H1 (cell line): ENCODE measurements at regions of chr20 and their contacts with region 1.

Region 1: DNA sequence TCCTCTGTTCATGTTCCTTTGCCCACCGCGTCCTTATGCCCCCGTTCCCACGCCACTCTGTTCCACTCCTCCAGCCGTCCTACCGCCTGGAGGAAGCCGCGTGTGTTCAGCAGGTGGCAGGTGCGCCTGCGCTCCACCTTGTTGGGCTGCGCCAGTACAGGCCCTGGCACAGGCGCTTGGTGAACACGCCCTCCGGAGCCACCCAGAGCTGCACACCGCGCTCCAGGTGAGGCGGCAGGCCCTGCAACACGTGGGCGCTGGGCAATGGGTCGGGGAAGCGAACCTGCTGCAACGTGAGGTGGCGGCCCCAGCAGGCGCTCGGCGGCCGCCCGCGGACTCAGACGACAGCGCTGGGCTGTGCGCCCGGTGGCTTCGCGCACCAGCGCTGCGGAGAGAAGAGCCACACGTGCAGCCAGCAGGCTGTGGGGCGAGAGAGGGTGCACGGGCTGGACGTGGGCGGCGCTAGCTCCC is 4.1 kb upstream of the FOXS1 start:
- DNase-seq: no peak
- H3K4me3 ChIP-seq: 0 out of 8 replicates have a peak overlapping the region, but pooled peaks of 1 of the 4 experiments have one; percentile 6
- H3K27ac ChIP-seq: no peak overlapping the region
- H3K4me1 ChIP-seq: peaks cover 0 to 14% (median 10%) of the 10 kb centered on the region in 4 experiments; a peak in 5 of 7 replicates
- H3K27me3 ChIP-seq: peaks cover 5 to 38% (median 25%) of the 10 kb centered on the region in 4 experiments
- CTCF ChIP-seq: no peak
- EP300 ChIP-seq: no peak
- POLR2A ChIP-seq: no peak
- RAD21 ChIP-seq: no peak; a peak in 1 of 4 replicates

Region 2: DNA sequence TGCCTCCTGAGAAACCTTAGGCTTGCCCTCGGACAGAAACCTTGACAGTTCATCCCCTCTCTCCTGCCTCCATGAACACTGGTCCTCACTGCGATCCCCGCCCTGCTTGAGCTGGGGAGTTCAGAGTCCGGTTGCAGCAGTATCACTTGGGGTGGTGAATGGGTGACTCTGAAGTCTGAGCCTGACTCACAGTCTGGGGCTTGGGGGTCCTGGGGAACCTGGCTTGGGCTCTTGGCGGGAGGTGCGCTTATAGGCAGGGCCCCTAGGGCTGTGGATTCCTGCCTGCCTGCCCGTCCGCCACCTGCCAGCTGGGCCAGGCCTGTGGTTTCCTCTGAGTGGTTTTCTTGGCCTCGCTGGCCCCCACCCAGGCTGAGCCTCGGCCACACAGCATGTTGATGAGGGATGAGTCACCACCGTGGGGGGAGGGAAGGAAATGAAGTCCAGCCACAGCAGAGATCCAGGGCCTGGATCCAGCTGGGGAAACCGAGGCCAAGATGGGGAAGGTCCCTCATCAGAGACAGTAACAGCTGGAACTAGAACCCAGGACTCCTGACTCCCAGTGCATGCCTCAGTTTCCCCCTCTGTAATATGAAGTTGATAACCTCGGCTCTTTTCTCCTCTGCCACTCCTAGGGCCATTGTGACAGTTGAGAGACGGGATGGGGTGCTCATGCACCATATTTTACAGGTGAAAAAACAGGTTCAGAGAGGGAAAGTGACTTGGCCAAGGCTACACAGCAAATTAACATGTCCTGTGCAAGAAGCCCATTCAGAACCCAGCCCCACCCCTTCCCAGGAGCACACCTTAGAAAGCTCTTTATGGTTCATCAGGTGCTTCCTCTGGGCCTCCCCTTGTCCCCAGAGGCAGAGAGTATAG is 13.3 kb before region 1 on chr20:
- CTCF ChIA-PET with region 1: interaction called, 111 read pairs
- POLR2A ChIA-PET with region 1: no interaction called
- DNase-seq: no peak
- H3K4me3 ChIP-seq: no peak overlapping the region
- H3K27ac ChIP-seq: no peak overlapping the region
- H3K4me1 ChIP-seq: peaks cover 0 to 17% (median 16%) of the 10 kb centered on the region in 4 experiments; a peak in 6 of 7 replicates
- H3K27me3 ChIP-seq: no peaks in the 10 kb centered on the region
- CTCF ChIP-seq: no peak
- EP300 ChIP-seq: no peak
- POLR2A ChIP-seq: no peak
- RAD21 ChIP-seq: no peak

Region 3: DNA sequence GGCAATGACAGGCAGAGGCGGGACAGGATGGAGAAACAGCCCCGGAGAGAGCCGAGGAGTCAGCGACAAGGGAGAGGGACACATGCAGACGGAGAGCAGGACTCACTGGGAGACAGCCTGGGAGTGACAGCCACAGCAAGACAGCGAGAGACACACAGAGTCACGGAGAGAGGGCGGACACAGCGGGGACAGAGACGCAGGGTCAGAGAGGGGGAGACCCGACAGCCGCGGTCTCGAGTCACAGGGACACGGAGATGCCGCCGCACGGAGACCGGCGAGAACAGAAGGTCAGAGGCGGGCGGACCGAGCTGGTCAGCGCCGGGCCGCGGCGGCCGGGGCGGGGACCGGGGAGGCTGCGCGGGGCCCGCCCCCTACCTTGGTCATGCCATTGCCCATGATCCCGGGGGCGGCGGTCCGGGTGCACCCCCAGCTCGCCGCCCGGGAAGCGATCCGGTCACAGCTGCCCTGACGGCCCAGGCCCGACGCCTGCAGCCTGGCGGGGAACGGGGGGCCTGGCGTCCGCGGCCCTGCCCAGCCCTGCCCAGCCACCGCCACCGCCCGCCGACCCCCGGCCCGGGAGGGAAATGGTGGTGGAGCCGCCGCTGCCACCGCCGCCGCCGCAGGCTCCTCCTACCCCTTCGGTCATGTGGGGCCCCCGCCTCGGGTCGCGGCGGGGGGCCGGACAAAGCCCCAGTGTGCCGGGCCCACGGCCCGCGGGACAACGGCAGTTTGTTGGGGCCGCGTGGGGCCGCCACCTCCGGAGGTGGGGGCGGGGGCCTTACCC is 20.6 kb after region 1 on chr20 and contains the starts of genes DUSP15 and TTLL9:
- CTCF ChIA-PET with region 1: interaction called, 32 read pairs
- POLR2A ChIA-PET with region 1: no interaction called
- DNase-seq: peak in 1 of 2 experiments; percentile 79
- H3K4me3 ChIP-seq: peak within 1 kb of the TSS; percentile 47 to 89 (median 71)
- H3K27ac ChIP-seq: no peak within 1 kb of the TSS
- H3K4me1 ChIP-seq: peaks cover 0 to 12% (median 6%) of the 10 kb centered on the region in 4 experiments; a peak in 6 of 7 replicates
- H3K27me3 ChIP-seq: peaks cover 19 to 35% (median 29%) of the 10 kb centered on the region in 4 experiments
- CTCF ChIP-seq: peak in 1 of 3 experiments; percentile 0; a peak in 1 of 4 replicates
- EP300 ChIP-seq: peak in 1 of 2 experiments; percentile 45; a peak in 1 of 3 replicates
- POLR2A ChIP-seq: peak in 1 of 2 experiments; percentile 32; a peak in 1 of 3 replicates
- RAD21 ChIP-seq: 0 out of 4 replicates have a peak, but pooled peaks of 1 of the 2 experiments have one; percentile 3
- total RNA-seq, gene DUSP15: 0.91 and 1.0 TPM in 2 replicates
- total RNA-seq, gene TTLL9: not detected in 2 replicates

Region 4: GRCh38 chr20:31943052-31943471 is 93.6 kb after region 1 on chr20:
- CTCF ChIA-PET with region 1: interaction called, 48 read pairs
- POLR2A ChIA-PET with region 1: no interaction called
- DNase-seq: no peak
- H3K4me3 ChIP-seq: no peak overlapping the region
- H3K27ac ChIP-seq: no peak overlapping the region
- H3K4me1 ChIP-seq: peaks cover 0 to 2% (median 1%) of the 10 kb centered on the region in 4 experiments; a peak in 4 of 7 replicates
- H3K27me3 ChIP-seq: peaks cover 0 to 7% (median 0%) of the 10 kb centered on the region in 4 experiments; a peak in 3 of 7 replicates
- CTCF ChIP-seq: no peak
- EP300 ChIP-seq: no peak
- POLR2A ChIP-seq: no peak
- RAD21 ChIP-seq: no peak

Region 5: GRCh38 chr20:31996996-31997395 is 147.5 kb after region 1 on chr20:
- CTCF ChIA-PET with region 1: interaction called, 28 read pairs
- POLR2A ChIA-PET with region 1: no interaction called
- DNase-seq: no peak
- H3K4me3 ChIP-seq: no peak overlapping the region
- H3K27ac ChIP-seq: no peak overlapping the region
- H3K4me1 ChIP-seq: peaks cover 0 to 10% (median 7%) of the 10 kb centered on the region in 4 experiments; a peak in 4 of 7 replicates
- H3K27me3 ChIP-seq: peaks cover 2 to 36% (median 28%) of the 10 kb centered on the region in 4 experiments
- CTCF ChIP-seq: no peak
- EP300 ChIP-seq: no peak
- POLR2A ChIP-seq: no peak
- RAD21 ChIP-seq: no peak

Region 6: DNA sequence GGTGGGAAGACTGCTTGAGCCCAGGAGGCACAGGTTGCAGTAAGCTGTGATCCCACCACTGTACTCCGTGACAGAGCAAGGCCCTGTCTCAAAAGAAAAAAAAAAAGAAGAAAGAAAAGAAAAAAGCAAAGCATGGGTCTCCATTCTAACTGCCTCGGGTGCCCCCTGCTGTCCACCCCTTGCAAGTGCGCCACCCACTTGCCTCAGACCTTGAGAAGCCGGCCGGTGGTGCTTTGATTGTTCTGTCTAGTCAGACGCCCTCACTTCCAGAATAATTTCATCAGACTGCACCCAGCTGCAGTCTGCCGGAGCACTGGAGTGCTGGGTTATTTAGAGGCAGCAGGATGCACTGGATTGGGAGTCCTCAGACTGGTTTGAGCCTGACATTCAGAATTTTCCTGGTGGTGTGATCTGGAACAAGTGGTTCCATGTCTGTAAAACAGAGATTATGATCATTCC is 242.4 kb after region 1 on chr20:
- CTCF ChIA-PET with region 1: interaction called, 21 read pairs
- POLR2A ChIA-PET with region 1: no interaction called
- DNase-seq: peak; percentile 62 to 93
- H3K4me3 ChIP-seq: no peak overlapping the region
- H3K27ac ChIP-seq: no peak overlapping the region
- H3K4me1 ChIP-seq: peaks cover 16 to 26% (median 24%) of the 10 kb centered on the region in 4 experiments
- H3K27me3 ChIP-seq: no peaks in the 10 kb centered on the region; a peak in 1 of 7 replicates
- CTCF ChIP-seq: peak; percentile 95 to 97 (median 96)
- EP300 ChIP-seq: 0 out of 3 replicates have a peak, but pooled peaks of 1 of the 2 experiments have one; percentile 57
- POLR2A ChIP-seq: no peak
- RAD21 ChIP-seq: peak; percentile 89 to 93

Region 7: GRCh38 chr20:32132911-32133549 is 283.5 kb after region 1 on chr20:
- CTCF ChIA-PET with region 1: no interaction called
- POLR2A ChIA-PET with region 1: no interaction called
- DNase-seq: no peak
- H3K4me3 ChIP-seq: no peak overlapping the region
- H3K27ac ChIP-seq: no peak overlapping the region
- H3K4me1 ChIP-seq: no peaks in the 10 kb centered on the region
- H3K27me3 ChIP-seq: no peaks in the 10 kb centered on the region
- CTCF ChIP-seq: no peak
- EP300 ChIP-seq: no peak
- POLR2A ChIP-seq: no peak
- RAD21 ChIP-seq: no peak